Activated CD4-positive, alpha-beta memory T cell treated with anti-CD3 and anti-CD28 coated beads, Interleukin-2, amount 10 ng/mL, durations not matched to agents 7 days and 5 days (primary cell): ENCODE measurements at regions of chr20 and their contacts with region 1.

Region 1: GRCh38 chr20:32357869-32358631 is at the start of gene ASXL1:
- DNase-seq: peak; percentile 97
- H3K4me3 Mint-ChIP-seq: peak within 1 kb of the TSS; percentile 97
- H3K27ac Mint-ChIP-seq: peak within 1 kb of the TSS; percentile 98
- H3K4me1 Mint-ChIP-seq: peaks cover 75% of the 10 kb centered on the region
- H3K27me3 Mint-ChIP-seq: no peaks in the 10 kb centered on the region
- total RNA-seq, gene ASXL1: 113 to 118 TPM

Region 2: DNA sequence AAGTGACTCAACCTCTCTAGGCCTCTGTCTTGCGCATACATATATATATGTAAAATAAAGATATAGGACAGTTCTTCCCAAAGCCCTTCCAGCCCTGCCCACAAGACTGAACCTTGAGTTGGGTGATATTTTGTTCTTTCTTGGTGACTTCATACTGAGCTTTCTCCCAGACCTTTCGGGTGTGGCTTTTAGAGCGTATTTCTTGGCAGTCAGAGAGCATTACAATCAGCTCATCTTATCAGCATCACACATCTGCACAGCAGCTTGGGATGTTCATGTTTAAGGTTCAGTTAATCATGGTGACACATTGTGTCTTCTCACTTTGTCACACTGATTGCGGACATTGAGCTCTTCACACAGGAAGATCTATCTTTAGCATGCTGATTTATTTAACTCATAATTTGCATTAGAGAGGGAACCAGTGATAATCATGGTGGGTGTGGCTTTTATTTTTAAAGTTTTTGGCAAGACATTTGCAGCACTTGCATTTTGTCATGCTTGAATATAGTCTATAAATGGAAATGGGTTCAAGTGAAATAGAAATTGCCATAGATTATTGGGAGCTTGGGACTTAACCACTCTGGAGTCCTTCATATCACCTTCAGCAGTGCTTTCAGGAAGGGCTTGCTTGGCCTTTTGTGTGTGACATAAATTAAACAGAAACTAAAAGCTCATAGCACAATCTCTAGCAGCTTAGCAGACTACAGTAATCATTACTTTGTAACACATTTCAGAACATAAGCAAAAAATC is 72.3 kb before region 1 on chr20:
- CTCF ChIA-PET with region 1: interaction called, 5 read pairs
- POLR2A ChIA-PET with region 1: interaction called, 50 read pairs
- DNase-seq: peak; percentile 68
- H3K4me3 Mint-ChIP-seq: peak overlapping the region; percentile 51
- H3K27ac Mint-ChIP-seq: peak overlapping the region; percentile 80
- H3K4me1 Mint-ChIP-seq: peaks cover 66% of the 10 kb centered on the region
- H3K27me3 Mint-ChIP-seq: no peaks in the 10 kb centered on the region

Region 3: GRCh38 chr20:32333988-32334885 is 23.8 kb before region 1 on chr20:
- CTCF ChIA-PET with region 1: interaction called, 5 read pairs
- POLR2A ChIA-PET with region 1: interaction called, 71 read pairs
- DNase-seq: peak; percentile 70
- H3K4me3 Mint-ChIP-seq: peak overlapping the region; percentile 50
- H3K27ac Mint-ChIP-seq: peak overlapping the region; percentile 97
- H3K4me1 Mint-ChIP-seq: peaks cover 58% of the 10 kb centered on the region
- H3K27me3 Mint-ChIP-seq: no peaks in the 10 kb centered on the region

Region 4: DNA sequence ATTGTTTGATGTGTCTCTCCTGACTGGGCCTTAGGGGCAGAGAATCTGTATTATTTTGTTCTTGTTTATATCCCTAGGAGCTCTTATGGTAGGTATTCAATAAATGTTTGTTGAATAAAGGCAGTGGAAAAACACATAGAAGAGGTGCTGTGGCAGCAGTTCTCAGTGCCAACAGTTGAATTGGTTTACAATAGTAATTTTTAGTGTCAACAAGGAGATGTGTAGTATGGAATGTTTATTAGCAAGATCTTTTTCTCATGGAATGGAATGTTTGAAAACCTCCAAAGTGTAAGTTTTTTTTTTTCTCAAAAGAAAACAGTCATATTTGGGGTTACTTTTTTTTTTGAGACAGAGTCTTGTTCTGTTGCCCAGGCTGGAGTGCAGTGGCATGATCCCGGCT is 28.0 kb after region 1 on chr20:
- CTCF ChIA-PET with region 1: interaction called, 5 read pairs
- POLR2A ChIA-PET with region 1: interaction called, 11 read pairs
- DNase-seq: no peak
- H3K4me3 Mint-ChIP-seq: no peak overlapping the region
- H3K27ac Mint-ChIP-seq: peak overlapping the region; percentile 24
- H3K4me1 Mint-ChIP-seq: peaks cover 45% of the 10 kb centered on the region
- H3K27me3 Mint-ChIP-seq: no peaks in the 10 kb centered on the region

Region 5: GRCh38 chr20:32521780-32522525 is 163.9 kb after region 1 on chr20:
- CTCF ChIA-PET with region 1: no interaction called
- POLR2A ChIA-PET with region 1: no interaction called
- DNase-seq: peak; percentile 69
- H3K4me3 Mint-ChIP-seq: no peak overlapping the region
- H3K27ac Mint-ChIP-seq: peak overlapping the region; percentile 70
- H3K4me1 Mint-ChIP-seq: peaks cover 43% of the 10 kb centered on the region
- H3K27me3 Mint-ChIP-seq: no peaks in the 10 kb centered on the region

Region 6: GRCh38 chr20:32626859-32627636 is 269.0 kb after region 1 on chr20:
- CTCF ChIA-PET with region 1: no interaction called
- POLR2A ChIA-PET with region 1: no interaction called
- DNase-seq: no peak
- H3K4me3 Mint-ChIP-seq: no peak overlapping the region
- H3K27ac Mint-ChIP-seq: no peak overlapping the region
- H3K4me1 Mint-ChIP-seq: no peaks in the 10 kb centered on the region
- H3K27me3 Mint-ChIP-seq: peaks cover 2% of the 10 kb centered on the region